ENCODE measurements at regions of chr15 and their contacts with region 1.

Region 1: GRCh38 chr15:67790610-67791319 is 34.5 kb upstream of the SKOR1 start:
- DNase-seq: no peak
- ATAC-seq: no peak
- H3K4me3 ChIP-seq: no peak overlapping the region
- H3K4me3 Mint-ChIP-seq: no peak overlapping the region
- H3K27ac ChIP-seq: no peak overlapping the region
- H3K27ac Mint-ChIP-seq: no peak overlapping the region
- H3K4me1 ChIP-seq: no peaks in the 10 kb centered on the region
- H3K4me1 Mint-ChIP-seq: peaks cover 0 to 3% (median 3%) of the 10 kb centered on the region in 3 donors
- H3K27me3 ChIP-seq: no peaks in the 10 kb centered on the region
- H3K27me3 Mint-ChIP-seq: no peaks in the 10 kb centered on the region

Region 2: DNA sequence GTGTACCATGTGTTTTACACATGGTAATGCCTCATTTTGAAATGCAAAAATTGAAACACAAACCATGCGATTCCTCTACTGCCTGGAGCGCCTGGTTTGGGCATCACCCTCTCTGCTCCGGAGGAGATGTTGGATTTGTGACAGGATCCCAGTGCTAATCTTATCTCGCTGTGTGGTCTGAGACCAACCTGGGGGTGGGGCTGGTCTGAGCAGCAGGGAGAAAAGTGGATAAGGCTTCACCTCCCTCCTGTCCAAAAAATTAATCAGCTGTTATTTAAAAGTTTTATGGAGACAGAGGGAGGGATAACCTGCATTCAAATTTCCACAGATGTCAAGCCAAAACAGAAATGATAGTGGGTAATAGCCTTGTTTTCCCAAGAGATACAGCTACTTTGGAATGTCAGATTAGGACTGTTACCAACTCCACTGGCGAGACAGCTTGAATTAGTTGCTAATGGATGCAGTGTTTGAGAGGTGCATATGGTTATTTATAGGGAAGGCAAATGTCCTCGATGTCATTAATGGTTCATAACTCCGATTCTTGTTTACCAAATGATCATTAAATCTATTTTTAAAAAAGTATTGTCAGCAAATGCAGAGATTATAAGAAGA is 19.5 kb before region 1 on chr15:
- CTCF ChIA-PET with region 1: interaction called in 1 of 2 experiments, 10 read pairs
- POLR2A ChIA-PET with region 1: no interaction called
- DNase-seq: no peak
- ATAC-seq: no peak
- H3K4me3 ChIP-seq: no peak overlapping the region
- H3K4me3 Mint-ChIP-seq: no peak overlapping the region
- H3K27ac ChIP-seq: no peak overlapping the region
- H3K27ac Mint-ChIP-seq: no peak overlapping the region
- H3K4me1 ChIP-seq: peaks cover 0 to 4% of the 10 kb centered on the region in 2 experiments
- H3K4me1 Mint-ChIP-seq: peaks cover 0 to 12% (median 8%) of the 10 kb centered on the region in 3 donors
- H3K27me3 ChIP-seq: no peaks in the 10 kb centered on the region
- H3K27me3 Mint-ChIP-seq: no peaks in the 10 kb centered on the region

Measured in T-cell (primary cell).